ENCODE measurements at regions of chr1 and their contacts with region 1.

Region 1: GRCh38 chr1:12454406-12455391 is 163.3 kb downstream of the DHRS3 start:
- DNase-seq: no peak
- ATAC-seq: peak; percentile 66
- H3K4me3 ChIP-seq: no peak overlapping the region
- H3K27ac ChIP-seq: peak overlapping the region; percentile 84
- H3K4me1 ChIP-seq: peaks cover 38% of the 10 kb centered on the region
- H3K27me3 ChIP-seq: no peaks in the 10 kb centered on the region
- CTCF ChIP-seq: no peak

Region 2: GRCh38 chr1:12438349-12438924 is 16.3 kb before region 1 on chr1:
- CTCF ChIA-PET with region 1: no interaction called
- POLR2A ChIA-PET with region 1: no interaction called
- in situ Hi-C with region 1: no loop called
- intact Hi-C with region 1: no loop called
- DNase-seq: no peak
- ATAC-seq: no peak
- H3K4me3 ChIP-seq: no peak overlapping the region
- H3K27ac ChIP-seq: peak overlapping the region; percentile 48; the same call in 1 of the 2 replicates
- H3K4me1 ChIP-seq: peaks cover 26% of the 10 kb centered on the region
- H3K27me3 ChIP-seq: no peaks in the 10 kb centered on the region
- CTCF ChIP-seq: no peak

Region 3: DNA sequence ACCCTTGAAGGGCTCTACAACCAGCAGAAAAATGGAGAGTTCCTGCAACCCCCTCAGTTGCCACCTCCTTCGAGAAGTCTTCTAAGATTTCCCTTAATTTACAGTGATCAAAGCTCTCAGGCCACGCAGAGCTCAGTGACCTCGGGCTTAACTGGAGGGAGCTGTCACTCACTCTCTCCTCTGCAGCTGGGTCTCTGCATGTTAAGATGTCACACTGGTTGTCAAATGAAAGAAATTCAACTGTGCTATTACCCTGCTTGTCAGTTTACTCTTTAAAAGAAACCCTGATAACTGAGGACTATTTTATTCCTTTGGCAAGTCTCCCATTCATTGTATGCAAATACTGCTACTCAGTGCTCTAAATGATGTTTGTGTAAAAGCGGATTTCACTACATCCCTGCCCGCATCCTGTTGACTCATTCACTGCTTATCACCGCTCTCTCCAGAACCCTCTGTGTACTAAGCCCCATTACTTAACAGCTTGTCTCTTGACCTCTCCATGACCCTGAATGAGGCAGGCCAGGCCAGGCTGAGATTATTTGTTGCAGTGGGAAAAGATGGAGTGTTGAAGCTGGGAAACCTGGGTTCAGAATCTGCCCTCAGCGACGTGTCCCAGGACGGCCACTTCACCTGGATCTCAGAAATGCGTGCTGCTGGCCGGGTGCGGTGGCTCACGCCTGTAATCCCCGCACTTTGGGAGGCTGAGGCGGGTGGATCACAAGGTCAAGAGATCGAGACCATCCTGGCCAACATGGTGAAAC is 149.6 kb after region 1 on chr1:
- CTCF ChIA-PET with region 1: no interaction called
- POLR2A ChIA-PET with region 1: interaction called, 13 read pairs
- in situ Hi-C with region 1: no loop called
- intact Hi-C with region 1: no loop called
- DNase-seq: peak; percentile 91
- ATAC-seq: peak; percentile 90
- H3K4me3 ChIP-seq: no peak overlapping the region
- H3K27ac ChIP-seq: peak overlapping the region; percentile 96
- H3K4me1 ChIP-seq: peaks cover 71% of the 10 kb centered on the region
- H3K27me3 ChIP-seq: no peaks in the 10 kb centered on the region
- CTCF ChIP-seq: no peak

Measured in Panc1 (cell line).